Activated CD8-positive, alpha-beta T cell treated with anti-CD3 and anti-CD28 coated beads, Interleukin-2, amount 10 ng/mL, durations not matched to agents 7 days and 5 days (primary cell): ENCODE measurements at regions of chr11 and their contacts with region 1.

Region 1: GRCh38 chr11:62081378-62082291 is 42.2 kb upstream of the INCENP start:
- DNase-seq: peak; percentile 82
- ATAC-seq: peak; percentile 67
- H3K4me3 Mint-ChIP-seq: peak overlapping the region; percentile 36
- H3K27ac Mint-ChIP-seq: no peak overlapping the region
- H3K4me1 Mint-ChIP-seq: peaks cover 8% of the 10 kb centered on the region
- H3K27me3 Mint-ChIP-seq: no peaks in the 10 kb centered on the region

Region 2: GRCh38 chr11:61792310-61793085 is 289.1 kb before region 1 on chr11 and contains the starts of genes FEN1 and TMEM258:
- CTCF ChIA-PET with region 1: interaction called, 48 read pairs
- POLR2A ChIA-PET with region 1: no interaction called
- DNase-seq: peak; percentile 92
- ATAC-seq: peak; percentile 93
- H3K4me3 Mint-ChIP-seq: peak within 1 kb of the TSS; percentile 86
- H3K27ac Mint-ChIP-seq: peak within 1 kb of the TSS; percentile 100
- H3K4me1 Mint-ChIP-seq: peaks cover 54% of the 10 kb centered on the region
- H3K27me3 Mint-ChIP-seq: no peaks in the 10 kb centered on the region
- total RNA-seq, gene FEN1: 146 TPM
- total RNA-seq, gene TMEM258: 154 to 163 TPM

Region 3: DNA sequence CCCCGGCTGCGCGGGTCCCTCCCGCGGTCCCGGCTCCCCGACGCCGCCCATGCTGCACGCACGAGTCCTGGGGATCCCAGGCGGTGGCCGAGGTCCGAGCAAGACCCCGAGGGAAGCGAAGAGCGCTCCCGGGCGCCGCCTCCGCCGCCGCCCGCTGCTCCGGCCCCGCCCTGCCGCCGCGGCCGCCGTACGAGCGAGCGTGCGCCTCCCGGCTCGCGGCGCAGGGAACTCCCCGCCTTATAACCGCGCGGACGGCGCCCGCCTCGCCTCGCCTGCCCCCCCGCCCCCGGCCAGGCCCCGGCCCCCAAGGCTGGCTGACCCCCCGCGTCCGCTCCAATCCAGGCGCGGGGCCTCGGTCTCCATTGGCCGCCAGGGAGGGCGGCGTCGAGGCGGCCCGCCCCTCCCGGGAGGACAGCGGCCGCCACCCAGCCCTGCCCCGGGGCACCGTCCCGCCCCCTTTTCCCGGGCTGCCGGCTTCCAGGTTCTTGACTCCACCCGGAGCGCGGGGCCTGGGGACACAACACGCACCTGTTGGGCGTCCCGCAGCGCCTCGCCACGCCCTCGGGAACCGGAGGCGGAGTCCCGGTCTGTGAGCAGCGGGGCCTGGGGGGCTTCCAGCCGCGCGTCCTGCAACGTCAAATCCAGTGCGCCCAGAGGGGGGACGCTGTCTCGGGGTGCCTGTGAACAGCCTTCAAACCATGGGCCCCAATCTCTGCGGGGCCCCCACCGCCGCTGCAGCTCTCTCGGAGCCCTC is 190.1 kb before region 1 on chr11 and contains the start of gene FADS3:
- CTCF ChIA-PET with region 1: interaction called, 337 read pairs
- POLR2A ChIA-PET with region 1: no interaction called
- DNase-seq: peak; percentile 58
- ATAC-seq: peak; percentile 85
- H3K4me3 Mint-ChIP-seq: peak within 1 kb of the TSS; percentile 79
- H3K27ac Mint-ChIP-seq: peak within 1 kb of the TSS; percentile 30
- H3K4me1 Mint-ChIP-seq: peaks cover 4% of the 10 kb centered on the region
- H3K27me3 Mint-ChIP-seq: peaks cover 4% of the 10 kb centered on the region
- total RNA-seq, gene FADS3: 3.8 to 4.5 TPM

Region 4: GRCh38 chr11:61923166-61924063 is 158.2 kb before region 1 on chr11:
- CTCF ChIA-PET with region 1: interaction called, 23 read pairs
- POLR2A ChIA-PET with region 1: no interaction called
- DNase-seq: no peak
- ATAC-seq: no peak
- H3K4me3 Mint-ChIP-seq: no peak overlapping the region
- H3K27ac Mint-ChIP-seq: no peak overlapping the region
- H3K4me1 Mint-ChIP-seq: peaks cover 2% of the 10 kb centered on the region
- H3K27me3 Mint-ChIP-seq: peaks cover 19% of the 10 kb centered on the region

Region 5: DNA sequence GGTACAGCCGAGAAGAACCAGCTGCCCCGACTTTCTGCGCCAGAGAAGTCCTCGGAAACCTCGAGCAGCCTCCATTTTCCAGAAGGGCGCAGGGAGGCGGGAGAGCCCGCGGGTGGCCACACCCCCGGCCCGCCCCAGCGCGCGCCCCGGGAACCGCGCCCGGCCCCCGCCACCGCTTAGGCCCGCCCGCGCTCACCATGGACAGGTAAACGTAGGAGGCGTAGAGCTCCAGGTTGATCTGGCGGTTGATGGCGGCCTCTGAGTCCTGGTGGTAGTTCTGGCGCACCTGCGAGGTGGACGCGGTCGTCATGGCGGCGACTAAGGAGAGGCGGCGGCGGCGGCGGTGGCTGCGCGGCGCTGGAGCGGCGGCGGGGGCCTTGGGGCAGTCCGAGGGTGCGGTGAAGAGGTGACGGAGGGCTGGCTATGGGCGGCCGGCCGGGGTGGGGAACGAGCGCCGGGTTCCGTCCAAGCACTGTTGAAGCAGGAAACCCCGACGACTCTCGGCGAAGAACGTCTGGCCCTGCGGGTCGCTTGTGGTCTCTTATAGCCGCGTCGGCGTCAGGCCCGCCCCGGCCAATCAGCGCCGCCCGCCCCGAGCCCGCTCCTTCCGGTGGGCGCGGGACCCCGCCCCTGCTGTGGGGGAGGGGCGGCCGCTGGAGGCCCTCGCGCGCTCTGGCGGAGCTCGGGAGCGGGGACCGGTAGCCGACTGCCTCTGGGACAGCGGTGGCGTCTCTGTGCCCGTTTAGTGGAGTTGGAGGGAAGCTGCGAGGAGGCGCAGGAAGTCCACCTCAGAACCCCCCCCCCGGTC is 114.3 kb before region 1 on chr11 and contains the start of gene FTH1:
- CTCF ChIA-PET with region 1: interaction called, 100 read pairs
- POLR2A ChIA-PET with region 1: interaction called, 7 read pairs
- DNase-seq: peak; percentile 90
- ATAC-seq: peak; percentile 76
- H3K4me3 Mint-ChIP-seq: peak within 1 kb of the TSS; percentile 93
- H3K27ac Mint-ChIP-seq: peak within 1 kb of the TSS; percentile 97
- H3K4me1 Mint-ChIP-seq: peaks cover 65% of the 10 kb centered on the region
- H3K27me3 Mint-ChIP-seq: no peaks in the 10 kb centered on the region
- total RNA-seq, gene FTH1: 709 to 727 TPM

Region 6: DNA sequence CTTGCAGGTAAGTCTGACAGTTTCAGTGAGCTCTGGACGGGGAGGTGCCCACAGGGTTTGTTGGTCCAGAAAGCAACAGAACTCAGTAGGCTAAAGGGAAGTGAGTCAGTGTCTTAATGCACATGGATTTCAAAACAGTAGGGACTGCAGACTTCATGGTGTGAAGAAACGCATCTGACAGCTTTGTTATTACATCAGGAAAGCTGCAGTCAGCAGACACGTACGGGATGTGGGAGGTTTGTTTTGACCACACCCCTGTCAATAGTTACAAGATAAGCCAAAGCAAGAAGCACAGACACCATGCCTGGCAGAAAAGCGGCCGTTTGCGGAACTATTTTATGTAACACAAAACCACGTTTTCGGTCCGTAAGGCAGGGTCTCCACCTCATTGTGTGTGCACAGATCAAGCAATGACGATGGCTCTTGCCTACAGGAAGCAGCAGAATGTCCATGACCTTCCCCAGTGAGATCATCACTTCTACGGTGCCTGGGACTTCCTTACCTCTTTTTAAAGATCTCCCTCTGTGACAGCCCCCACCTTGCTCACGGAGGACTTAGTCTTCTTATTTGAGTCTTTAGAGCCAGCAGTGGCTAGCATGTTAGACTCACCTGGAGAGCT is 56.0 kb before region 1 on chr11:
- CTCF ChIA-PET with region 1: interaction called, 28 read pairs
- POLR2A ChIA-PET with region 1: no interaction called
- DNase-seq: peak; percentile 85
- ATAC-seq: peak; percentile 93
- H3K4me3 Mint-ChIP-seq: peak overlapping the region; percentile 63
- H3K27ac Mint-ChIP-seq: peak overlapping the region; percentile 98
- H3K4me1 Mint-ChIP-seq: peaks cover 14% of the 10 kb centered on the region
- H3K27me3 Mint-ChIP-seq: peaks cover 3% of the 10 kb centered on the region

Region 7: GRCh38 chr11:62108017-62108750 is 26.5 kb after region 1 on chr11:
- CTCF ChIA-PET with region 1: interaction called, 107 read pairs
- POLR2A ChIA-PET with region 1: interaction called, 3 read pairs
- DNase-seq: peak; percentile 63
- ATAC-seq: peak; percentile 21
- H3K4me3 Mint-ChIP-seq: no peak overlapping the region
- H3K27ac Mint-ChIP-seq: no peak overlapping the region
- H3K4me1 Mint-ChIP-seq: peaks cover 22% of the 10 kb centered on the region
- H3K27me3 Mint-ChIP-seq: peaks cover 12% of the 10 kb centered on the region

Region 8: GRCh38 chr11:62143727-62144126 is 62.1 kb after region 1 on chr11:
- CTCF ChIA-PET with region 1: no interaction called
- POLR2A ChIA-PET with region 1: no interaction called
- DNase-seq: no peak
- ATAC-seq: no peak
- H3K4me3 Mint-ChIP-seq: no peak overlapping the region
- H3K27ac Mint-ChIP-seq: no peak overlapping the region
- H3K4me1 Mint-ChIP-seq: no peaks in the 10 kb centered on the region
- H3K27me3 Mint-ChIP-seq: no peaks in the 10 kb centered on the region

Region 9: DNA sequence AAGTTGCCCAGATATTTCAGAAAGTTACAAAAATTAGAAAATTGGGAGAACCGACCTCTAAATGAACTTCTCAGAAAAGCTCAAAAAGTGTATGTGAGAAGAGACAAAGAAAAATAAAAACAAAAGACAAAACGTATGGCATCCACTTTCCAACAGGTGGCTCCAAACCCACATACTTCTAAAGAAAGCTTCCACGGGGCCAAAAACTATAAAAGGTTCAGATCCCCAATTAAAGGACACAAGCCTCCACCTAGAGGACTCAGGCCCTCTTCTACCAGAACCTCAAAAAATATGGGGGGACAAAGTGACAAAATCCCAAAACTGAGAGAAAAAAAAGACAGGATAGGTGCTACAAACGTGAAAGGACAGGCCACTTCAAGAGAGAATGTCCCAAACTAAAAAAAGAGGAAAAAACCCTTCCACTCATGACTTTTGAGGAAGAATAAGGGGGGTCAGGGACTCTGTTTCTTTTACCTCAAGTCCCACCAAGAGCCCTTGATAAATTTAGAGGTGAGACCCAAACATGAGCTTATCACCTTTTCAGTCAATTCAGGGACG is 135.6 kb after region 1 on chr11:
- CTCF ChIA-PET with region 1: no interaction called
- POLR2A ChIA-PET with region 1: no interaction called
- DNase-seq: no peak
- ATAC-seq: no peak
- H3K4me3 Mint-ChIP-seq: no peak overlapping the region
- H3K27ac Mint-ChIP-seq: no peak overlapping the region
- H3K4me1 Mint-ChIP-seq: no peaks in the 10 kb centered on the region
- H3K27me3 Mint-ChIP-seq: peaks cover 25% of the 10 kb centered on the region

Region 10: DNA sequence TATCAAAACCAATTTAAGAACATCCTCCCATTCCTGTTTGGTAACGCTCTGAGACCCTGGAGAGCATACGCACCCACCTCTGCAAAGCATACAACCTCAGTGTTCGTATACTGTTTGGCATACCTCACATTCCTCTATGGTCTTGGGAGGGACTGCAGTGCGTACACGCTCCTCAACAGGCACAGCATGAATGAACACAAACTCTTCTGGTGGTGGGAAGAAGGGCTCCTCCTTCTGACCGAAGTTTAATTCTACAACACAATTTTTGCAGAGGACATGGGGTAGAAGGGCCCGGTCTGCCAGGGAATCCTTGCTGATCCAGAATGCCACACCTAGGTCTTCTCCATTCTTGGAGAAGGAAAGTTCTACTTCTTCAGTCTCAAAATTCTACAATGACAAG is 640.4 kb after region 1 on chr11:
- CTCF ChIA-PET with region 1: no interaction called
- POLR2A ChIA-PET with region 1: no interaction called
- DNase-seq: no peak
- ATAC-seq: no peak
- H3K4me3 Mint-ChIP-seq: no peak overlapping the region
- H3K27ac Mint-ChIP-seq: no peak overlapping the region
- H3K4me1 Mint-ChIP-seq: peaks cover 65% of the 10 kb centered on the region
- H3K27me3 Mint-ChIP-seq: no peaks in the 10 kb centered on the region

Region 11: GRCh38 chr11:62786318-62787004 is 704.8 kb after region 1 on chr11:
- CTCF ChIA-PET with region 1: no interaction called
- POLR2A ChIA-PET with region 1: no interaction called
- DNase-seq: peak; percentile 91
- ATAC-seq: peak; percentile 69
- H3K4me3 Mint-ChIP-seq: peak overlapping the region; percentile 79
- H3K27ac Mint-ChIP-seq: peak overlapping the region; percentile 91
- H3K4me1 Mint-ChIP-seq: peaks cover 42% of the 10 kb centered on the region
- H3K27me3 Mint-ChIP-seq: no peaks in the 10 kb centered on the region